Mucosa of descending colon (tissue), 3 donors: ENCODE measurements at regions of chr5 and their contacts with region 1.

Region 1: GRCh38 chr5:170225326-170226128 is 7.3 kb upstream of the C5orf58 start:
- DNase-seq: peak in 2 of 3 donors; percentile 38 to 84
- ATAC-seq: peak; percentile 54
- H3K4me3 ChIP-seq: no peak overlapping the region
- H3K4me1 ChIP-seq: no peaks in the 10 kb centered on the region
- CTCF ChIP-seq: peak; percentile 31

Region 2: GRCh38 chr5:170420780-170421412 is 195.4 kb after region 1 on chr5:
- intact Hi-C with region 1: loop called (anchors 5 to 10 kb)
- DNase-seq: peak in 1 of 3 donors; percentile 77
- ATAC-seq: peak; percentile 58
- H3K4me3 ChIP-seq: no peak overlapping the region
- H3K4me1 ChIP-seq: no peaks in the 10 kb centered on the region
- CTCF ChIP-seq: peak; percentile 40